Heart right ventricle (tissue), 16 donors: ENCODE measurements at regions of chr3 and their contacts with region 1.

Region 1: GRCh38 chr3:48507351-48508061 is 3.5 kb upstream of the SHISA5 start:
- DNase-seq: peak; percentile 39 to 40
- ATAC-seq: peak in 3 of 8 donors; percentile 25 to 47 (median 40)
- H3K4me3 ChIP-seq: no peak overlapping the region
- H3K27ac ChIP-seq: peak overlapping the region in 4 of 10 donors; percentile 15 to 50 (median 28)
- H3K4me1 ChIP-seq: peaks cover 8 to 39% (median 20%) of the 10 kb centered on the region in 9 donors
- H3K27me3 ChIP-seq: no peaks in the 10 kb centered on the region
- CTCF ChIP-seq: peak in 7 of 9 donors; percentile 43 to 69 (median 54)

Region 2: GRCh38 chr3:47327299-47327698 is 1180.2 kb before region 1 on chr3:
- intact Hi-C with region 1: no loop called
- DNase-seq: no peak
- ATAC-seq: no peak
- H3K4me3 ChIP-seq: no peak overlapping the region
- H3K27ac ChIP-seq: no peak overlapping the region
- H3K4me1 ChIP-seq: no peaks in the 10 kb centered on the region
- H3K27me3 ChIP-seq: no peaks in the 10 kb centered on the region
- CTCF ChIP-seq: no peak

Region 3: DNA sequence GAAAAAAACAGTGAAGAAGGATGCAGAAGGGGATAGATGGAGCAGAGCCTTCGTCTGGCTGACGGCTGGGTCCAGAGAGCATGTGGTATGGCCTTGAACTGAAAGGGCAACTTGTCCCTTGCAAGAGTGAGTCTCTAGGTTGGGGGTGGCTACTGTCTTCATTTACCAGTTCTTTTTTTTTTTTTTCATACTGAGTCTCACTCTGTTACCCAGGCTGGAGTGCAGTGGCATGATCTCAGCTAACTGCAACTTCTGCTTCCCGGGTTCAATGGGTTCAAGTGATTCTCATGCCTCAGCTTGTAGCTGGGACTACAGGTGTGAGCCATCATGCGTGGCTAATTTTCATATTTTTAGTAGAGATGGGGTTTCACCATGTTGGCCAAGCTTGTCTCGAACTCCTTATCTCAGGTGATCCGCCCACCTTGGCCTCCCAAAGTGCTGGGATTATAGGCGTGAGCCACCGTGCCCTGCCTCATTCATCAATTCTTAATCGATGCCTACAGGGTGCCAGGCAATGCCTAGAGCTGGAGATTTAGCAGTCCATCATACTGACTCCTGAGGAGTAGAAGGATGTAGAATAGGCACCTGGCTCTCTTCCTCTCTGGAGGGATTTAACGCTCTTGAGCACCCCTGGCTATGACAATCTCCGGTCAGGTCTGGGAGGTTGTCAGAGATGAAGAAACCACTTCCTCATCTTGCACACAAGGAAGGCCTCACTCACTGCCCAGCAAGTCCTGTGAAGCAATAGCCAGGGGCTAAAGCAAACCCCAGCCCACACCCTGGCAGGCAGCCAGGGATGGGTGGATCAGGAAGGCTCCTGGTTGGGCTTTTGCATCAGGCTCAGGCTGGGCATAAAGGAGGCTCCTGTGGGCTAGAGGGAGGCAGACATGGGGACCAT is 284.6 kb before region 1 on chr3 and contains the start of gene CAMP:
- intact Hi-C with region 1: no loop called
- DNase-seq: peak in 1 of 2 donors; percentile 73
- ATAC-seq: peak in 7 of 8 donors; percentile 46 to 63 (median 58)
- H3K4me3 ChIP-seq: no peak within 1 kb of the TSS
- H3K27ac ChIP-seq: peak within 1 kb of the TSS in 1 of 10 donors; percentile 64
- H3K4me1 ChIP-seq: peaks cover 0 to 32% (median 0%) of the 10 kb centered on the region in 9 donors
- H3K27me3 ChIP-seq: no peaks in the 10 kb centered on the region
- CTCF ChIP-seq: no peak
- total RNA-seq, gene CAMP: 0.33 to 3.3 (median 0.42) TPM in 5 of 10 donors, not detected in the others

Region 4: GRCh38 chr3:48347500-48347899 is 160.0 kb before region 1 on chr3:
- intact Hi-C with region 1: no loop called
- DNase-seq: no peak
- ATAC-seq: no peak
- H3K4me3 ChIP-seq: no peak overlapping the region
- H3K27ac ChIP-seq: no peak overlapping the region
- H3K4me1 ChIP-seq: no peaks in the 10 kb centered on the region
- H3K27me3 ChIP-seq: peaks cover 0 to 11% (median 0%) of the 10 kb centered on the region in 7 donors
- CTCF ChIP-seq: no peak

Region 5: GRCh38 chr3:48472915-48473616 is 34.4 kb before region 1 on chr3:
- intact Hi-C with region 1: loop called in 4 of 10 experiments (anchors 2 to 5 kb)
- DNase-seq: peak; percentile 92 to 95
- ATAC-seq: peak; percentile 92 to 95 (median 94)
- H3K4me3 ChIP-seq: peak overlapping the region; percentile 58 to 81 (median 64)
- H3K27ac ChIP-seq: peak overlapping the region; percentile 89 to 99 (median 95)
- H3K4me1 ChIP-seq: peaks cover 12 to 71% (median 60%) of the 10 kb centered on the region in 9 donors
- H3K27me3 ChIP-seq: no peaks in the 10 kb centered on the region
- CTCF ChIP-seq: peak in 8 of 9 donors; percentile 24 to 66 (median 44)

Region 6: DNA sequence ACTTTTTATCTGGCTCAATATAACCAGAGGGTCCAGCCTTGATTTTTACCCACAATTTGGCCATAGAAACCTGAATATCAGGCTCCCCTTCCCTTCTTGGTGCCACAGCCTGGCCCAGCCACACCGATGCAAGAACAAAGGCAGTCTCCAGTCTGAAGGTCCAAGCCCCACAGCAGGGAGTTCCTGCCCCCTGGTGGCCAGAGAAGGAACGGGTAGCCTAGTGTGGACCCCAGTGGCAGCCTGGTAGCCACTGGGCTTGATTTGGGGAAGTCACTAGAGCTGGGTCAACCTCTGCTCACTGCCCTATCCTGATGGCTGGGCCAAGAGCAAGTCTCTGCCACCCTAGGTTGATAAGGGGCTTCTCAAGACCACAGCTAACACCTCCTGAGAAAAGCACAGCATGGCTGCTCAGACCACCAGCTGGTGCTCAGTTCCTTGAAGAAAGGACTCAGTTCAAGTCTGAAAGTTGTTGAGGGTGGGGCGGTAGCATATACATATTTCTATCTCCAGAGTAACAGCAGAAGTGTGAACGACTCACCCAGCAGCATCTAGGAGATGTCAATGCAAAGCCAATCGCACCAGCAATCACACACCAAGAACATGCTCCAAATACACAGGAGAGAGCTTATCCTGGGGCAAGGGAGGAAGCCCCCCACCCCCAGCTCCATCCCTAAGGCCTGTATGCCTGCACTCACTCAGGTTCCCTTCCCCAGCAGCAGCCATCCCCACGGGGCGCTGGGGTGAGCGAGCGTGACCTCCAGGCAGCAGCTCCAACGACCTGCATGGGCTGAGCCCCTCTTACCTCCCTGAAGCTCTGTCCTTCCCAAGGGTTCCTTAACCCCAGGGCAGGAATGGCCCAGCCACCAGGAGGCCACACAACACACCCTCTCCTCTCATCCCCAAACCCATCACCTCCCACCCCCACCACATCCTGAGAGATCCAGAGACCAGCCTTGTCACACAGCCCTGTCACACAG is 41.5 kb after region 1 on chr3:
- intact Hi-C with region 1: loop called in 1 of 10 experiments (anchors 5 kb)
- DNase-seq: peak; percentile 86 to 87
- ATAC-seq: peak; percentile 83 to 97 (median 94)
- H3K4me3 ChIP-seq: no peak overlapping the region
- H3K27ac ChIP-seq: no peak overlapping the region
- H3K4me1 ChIP-seq: peaks cover 0 to 38% (median 5%) of the 10 kb centered on the region in 9 donors
- H3K27me3 ChIP-seq: no peaks in the 10 kb centered on the region
- CTCF ChIP-seq: peak; percentile 92 to 98 (median 95)

Region 7: DNA sequence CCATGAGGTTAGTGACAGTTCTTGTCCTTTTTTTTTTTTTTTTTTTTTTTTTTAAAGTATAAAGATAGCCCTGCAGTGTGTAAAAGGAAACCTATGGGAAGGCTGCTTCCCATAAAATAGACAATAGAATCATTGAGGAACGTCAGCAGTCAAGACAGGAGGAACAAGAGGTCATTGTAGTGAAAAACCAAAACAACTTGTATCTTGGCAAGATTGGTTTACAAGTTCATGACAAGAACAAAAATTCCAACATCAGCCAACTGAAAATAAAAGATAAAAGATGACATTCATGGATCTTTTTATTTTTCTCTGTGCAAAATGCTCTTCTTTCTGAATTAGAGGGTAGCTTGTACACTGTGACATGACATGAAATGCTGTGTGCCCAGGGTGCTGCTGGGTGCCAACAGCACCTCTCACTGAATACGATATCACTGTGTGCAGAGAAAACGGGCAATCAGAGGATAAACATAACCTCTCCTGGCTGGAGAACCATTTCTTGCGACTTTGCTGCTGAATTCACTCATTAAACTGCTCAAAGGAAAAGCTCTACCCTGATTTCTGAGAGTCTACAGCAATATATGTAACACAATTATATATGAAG is 239.6 kb after region 1 on chr3:
- intact Hi-C with region 1: no loop called
- DNase-seq: no peak
- ATAC-seq: peak in 6 of 8 donors; percentile 39 to 85 (median 60)
- H3K4me3 ChIP-seq: no peak overlapping the region
- H3K27ac ChIP-seq: peak overlapping the region; percentile 24 to 81 (median 64)
- H3K4me1 ChIP-seq: peaks cover 6 to 42% (median 26%) of the 10 kb centered on the region in 9 donors
- H3K27me3 ChIP-seq: no peaks in the 10 kb centered on the region
- CTCF ChIP-seq: no peak